Posterior vena cava (tissue), 2 donors: ENCODE measurements at regions of chr21 and their contacts with region 1.

Region 1: DNA sequence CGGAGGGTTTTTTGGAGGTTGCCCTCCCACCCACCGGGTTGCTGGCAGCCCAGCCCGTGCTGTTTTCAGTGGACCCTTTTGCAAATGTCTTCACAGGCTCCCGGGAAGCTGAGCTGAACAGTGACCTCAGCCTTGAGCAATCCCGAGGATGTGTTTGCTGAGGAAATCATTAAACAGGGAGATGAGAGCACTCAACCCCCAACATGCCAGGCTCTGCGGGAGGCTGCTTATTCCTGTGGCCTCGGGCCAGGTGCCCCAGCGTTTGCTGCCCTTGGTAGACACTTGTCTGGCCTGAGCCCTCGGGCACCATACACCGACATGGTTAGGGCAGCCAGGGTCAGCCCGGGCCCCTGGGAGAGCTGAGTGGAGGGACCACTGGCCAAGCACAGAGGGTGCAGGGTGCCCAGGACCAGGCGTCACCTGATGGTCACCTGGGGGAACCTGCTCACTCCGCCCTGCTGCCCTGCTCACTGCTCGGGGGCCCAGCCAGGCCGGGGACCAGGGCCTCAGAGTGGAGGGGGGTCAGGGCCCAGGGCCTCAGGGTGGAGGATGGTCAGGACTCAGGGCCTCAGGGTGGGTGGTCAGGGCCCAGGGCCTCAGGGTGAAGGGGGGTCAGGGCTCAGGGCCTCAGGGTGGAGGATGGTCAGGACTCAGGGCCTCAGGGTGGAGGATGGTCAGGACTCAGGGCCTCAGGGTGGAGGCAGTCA is 42.5 kb upstream of the POFUT2 start:
- DNase-seq: peak; percentile 81

Region 2: DNA sequence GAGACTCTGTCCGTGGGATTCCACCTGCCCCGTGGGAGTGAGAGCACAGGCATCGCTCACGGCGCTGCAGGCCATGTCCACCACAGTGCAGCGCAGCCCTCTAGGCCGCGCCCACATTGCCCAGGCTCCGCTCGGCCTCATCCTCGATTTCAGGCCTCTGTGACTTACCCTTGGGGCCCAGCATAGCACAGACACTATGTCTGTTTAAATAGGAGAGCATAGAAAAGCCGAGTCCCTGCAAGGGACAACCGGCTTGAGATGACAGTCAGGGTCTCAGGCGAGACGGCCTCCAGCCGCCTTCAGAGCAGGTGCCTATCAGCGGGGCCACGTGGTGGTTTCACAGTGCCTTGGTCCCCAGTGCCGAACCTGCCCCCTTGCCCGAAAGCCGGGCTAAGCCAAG is 14.3 kb after region 1 on chr21:
- intact Hi-C with region 1: loop called in 1 of 2 experiments (anchors 2 kb)
- DNase-seq: no peak